ENCODE measurements at regions of chr10 and their contacts with region 1.

Region 1: DNA sequence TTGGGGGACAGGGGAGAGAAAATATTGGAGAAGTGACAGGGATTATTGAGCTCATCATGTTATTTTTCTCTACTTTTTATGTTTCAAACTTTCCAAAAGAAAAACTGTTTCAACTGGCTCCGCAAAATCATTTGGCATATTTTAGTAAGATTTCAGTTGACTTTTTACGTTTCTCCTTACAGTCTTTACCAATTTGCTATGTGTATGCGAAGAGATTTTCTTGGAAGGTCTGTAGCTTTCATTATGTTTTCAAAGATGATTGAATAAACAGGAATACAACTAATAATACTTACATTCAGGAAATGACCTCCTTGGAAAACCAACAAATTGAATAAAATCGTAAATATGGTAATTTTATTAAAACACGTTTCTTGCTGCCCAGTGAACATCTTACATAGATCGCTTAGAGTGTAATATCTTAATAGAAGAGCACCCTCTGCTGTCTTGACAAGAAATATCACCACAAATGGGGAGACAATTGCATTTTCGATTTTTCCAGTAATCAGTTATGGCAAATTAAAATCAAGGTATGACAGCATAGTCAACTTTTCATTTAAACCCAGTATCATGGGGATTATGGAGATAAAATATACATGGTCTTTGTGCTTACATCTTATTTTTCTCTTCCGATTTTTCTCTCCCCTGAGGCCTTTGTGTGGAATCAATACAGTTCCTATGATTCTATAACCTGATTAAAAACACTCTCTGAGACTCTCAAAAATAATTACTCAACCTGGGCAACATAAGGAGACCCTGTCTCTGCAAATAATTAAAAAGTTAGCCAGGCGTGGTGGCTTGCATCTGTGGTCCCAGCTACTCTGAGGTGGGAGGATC is 43.1 kb downstream of the MBL2 start:
- DNase-seq: peak; percentile 95
- ATAC-seq: peak; percentile 93
- H3K4me3 ChIP-seq: peak overlapping the region; percentile 41
- H3K27ac ChIP-seq: no peak overlapping the region
- H3K4me1 ChIP-seq: peaks cover 16% of the 10 kb centered on the region
- H3K27me3 ChIP-seq: no peaks in the 10 kb centered on the region
- CTCF ChIP-seq: peak; percentile 100

Region 2: DNA sequence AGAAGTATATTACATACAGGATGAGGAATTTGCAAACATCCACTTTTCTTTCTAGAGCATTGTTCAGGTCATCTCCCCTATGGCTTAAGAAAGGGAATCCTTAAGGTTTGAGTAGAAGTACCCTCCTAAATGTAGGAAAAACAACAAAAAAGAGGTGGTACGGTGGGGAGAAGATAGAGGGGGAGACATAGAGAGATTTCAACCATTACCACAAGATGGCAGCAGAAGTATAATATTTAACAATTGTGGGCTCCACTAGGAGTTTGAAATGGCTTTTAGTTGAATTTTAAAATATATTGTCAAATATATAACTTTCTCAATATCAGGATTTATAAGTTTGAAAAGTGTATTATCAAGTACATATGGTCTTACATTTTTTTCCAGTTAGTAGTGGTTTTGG is 1727.9 kb before region 1 on chr10:
- CTCF ChIA-PET with region 1: no interaction called
- POLR2A ChIA-PET with region 1: no interaction called
- intact Hi-C with region 1: loop called (anchors 10 kb)
- DNase-seq: peak; percentile 85
- ATAC-seq: peak; percentile 87
- H3K4me3 ChIP-seq: no peak overlapping the region
- H3K27ac ChIP-seq: no peak overlapping the region
- H3K4me1 ChIP-seq: no peaks in the 10 kb centered on the region
- H3K27me3 ChIP-seq: peaks cover 73% of the 10 kb centered on the region
- CTCF ChIP-seq: peak; percentile 99

Region 3: GRCh38 chr10:52308251-52309031 is 421.0 kb before region 1 on chr10:
- CTCF ChIA-PET with region 1: interaction called, 4 read pairs
- POLR2A ChIA-PET with region 1: no interaction called
- intact Hi-C with region 1: loop called (anchors 1 kb)
- DNase-seq: peak; percentile 94
- ATAC-seq: peak; percentile 86
- H3K4me3 ChIP-seq: peak overlapping the region; percentile 55
- H3K27ac ChIP-seq: 0 out of 2 replicates have a peak overlapping the region, but pooled peaks have one; percentile 2
- H3K4me1 ChIP-seq: peaks cover 36% of the 10 kb centered on the region
- H3K27me3 ChIP-seq: no peaks in the 10 kb centered on the region
- CTCF ChIP-seq: peak; percentile 99

Region 4: DNA sequence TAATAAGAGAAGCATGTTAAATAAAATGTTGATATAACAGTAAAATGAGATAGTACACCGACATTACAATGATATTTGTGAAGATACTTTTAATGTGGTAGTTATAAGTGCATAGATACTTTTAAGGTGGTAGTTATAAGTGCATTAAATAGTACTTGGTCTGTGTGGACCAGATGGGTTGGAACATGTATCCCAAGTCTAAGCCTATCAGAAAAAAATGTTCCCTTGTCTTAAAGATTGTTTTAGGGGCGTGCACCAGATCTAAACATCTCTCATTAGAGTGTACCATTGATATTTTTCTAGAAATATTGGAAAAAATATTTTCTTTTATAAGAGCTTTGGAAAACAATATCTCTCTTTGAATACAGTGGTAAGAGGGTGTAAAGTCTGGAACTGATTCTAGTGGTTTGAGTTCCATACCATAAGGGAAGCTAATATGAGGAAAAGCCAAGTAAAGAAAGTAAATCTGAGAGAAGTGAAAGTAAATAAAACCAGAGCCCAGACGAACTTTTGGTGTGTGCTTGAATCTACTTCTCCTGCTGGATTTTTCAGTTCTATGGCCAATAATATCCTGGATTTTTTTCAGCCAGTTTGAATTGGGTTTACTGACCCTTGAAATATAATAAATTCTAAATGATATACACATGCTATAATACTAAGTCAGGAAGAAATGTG is 132.2 kb before region 1 on chr10:
- CTCF ChIA-PET with region 1: no interaction called
- POLR2A ChIA-PET with region 1: no interaction called
- intact Hi-C with region 1: loop called (anchors 1 kb)
- DNase-seq: peak; percentile 52
- ATAC-seq: peak; percentile 42
- H3K4me3 ChIP-seq: peak overlapping the region; percentile 61
- H3K27ac ChIP-seq: no peak overlapping the region
- H3K4me1 ChIP-seq: peaks cover 24% of the 10 kb centered on the region
- H3K27me3 ChIP-seq: no peaks in the 10 kb centered on the region
- CTCF ChIP-seq: no peak

Region 5: GRCh38 chr10:52644373-52645186 is 84.9 kb before region 1 on chr10:
- CTCF ChIA-PET with region 1: interaction called, 5 read pairs
- POLR2A ChIA-PET with region 1: no interaction called
- intact Hi-C with region 1: loop called (anchors 1 kb)
- DNase-seq: peak; percentile 97
- ATAC-seq: peak; percentile 83
- H3K4me3 ChIP-seq: peak overlapping the region; percentile 18; the same call in 1 of the 2 replicates
- H3K27ac ChIP-seq: no peak overlapping the region
- H3K4me1 ChIP-seq: peaks cover 15% of the 10 kb centered on the region
- H3K27me3 ChIP-seq: no peaks in the 10 kb centered on the region
- CTCF ChIP-seq: peak; percentile 100

Region 6: GRCh38 chr10:52703898-52704297 is 25.6 kb before region 1 on chr10:
- CTCF ChIA-PET with region 1: no interaction called
- POLR2A ChIA-PET with region 1: no interaction called
- intact Hi-C with region 1: loop called (anchors 1 kb)
- DNase-seq: peak; percentile 93
- ATAC-seq: peak; percentile 79
- H3K4me3 ChIP-seq: peak overlapping the region; percentile 62
- H3K27ac ChIP-seq: peak overlapping the region; percentile 83
- H3K4me1 ChIP-seq: peaks cover 32% of the 10 kb centered on the region
- H3K27me3 ChIP-seq: no peaks in the 10 kb centered on the region
- CTCF ChIP-seq: no peak